HepG2 (cell line): ENCODE measurements at regions of chr2 and their contacts with region 1.

Region 1: DNA sequence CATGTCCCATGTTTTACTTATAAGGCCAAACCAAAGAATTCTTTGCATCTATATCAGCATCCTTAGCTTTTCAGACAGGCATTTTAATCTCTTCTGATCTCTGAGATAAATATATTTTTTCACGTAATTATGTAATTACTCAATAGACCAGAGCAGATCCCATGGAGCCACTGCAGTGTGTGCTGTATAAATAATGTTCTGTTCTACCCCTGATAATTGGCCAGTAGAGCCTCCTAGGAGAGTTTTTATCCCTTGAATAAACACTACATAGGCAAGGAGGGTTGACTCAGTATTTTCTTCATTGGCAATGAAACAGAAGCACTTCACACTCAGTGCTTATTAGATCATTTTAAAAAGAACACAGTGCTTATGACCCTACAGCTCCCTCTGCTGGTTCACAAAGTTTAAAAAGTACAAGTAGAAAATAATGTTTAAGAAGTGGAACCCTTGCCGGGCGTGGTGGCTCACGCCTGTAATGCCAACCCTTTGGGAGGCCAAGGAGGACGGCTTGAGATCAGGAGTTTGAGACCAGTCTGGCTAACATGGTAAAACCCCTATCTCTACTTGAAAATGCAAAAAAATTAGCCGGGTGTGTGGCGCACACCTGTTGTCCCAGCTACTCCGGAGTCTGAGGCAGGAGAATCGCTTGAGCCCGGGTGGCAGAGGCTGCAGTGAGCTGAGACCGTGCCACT is 91.9 kb downstream of the PPP1R1C start:
- DNase-seq: peak; percentile 79
- ATAC-seq: peak; percentile 89
- H3K4me3 ChIP-seq: no peak overlapping the region
- H3K27ac ChIP-seq: no peak overlapping the region
- H3K4me1 ChIP-seq: 0 out of 2 replicates have a peak, but pooled peaks cover 12% of the 10 kb centered on the region
- H3K27me3 ChIP-seq: no peaks in the 10 kb centered on the region
- CTCF ChIP-seq: peak; percentile 84
- EP300 ChIP-seq: no peak
- POLR2A ChIP-seq: no peak
- RAD21 ChIP-seq: peak; percentile 71

Region 2: DNA sequence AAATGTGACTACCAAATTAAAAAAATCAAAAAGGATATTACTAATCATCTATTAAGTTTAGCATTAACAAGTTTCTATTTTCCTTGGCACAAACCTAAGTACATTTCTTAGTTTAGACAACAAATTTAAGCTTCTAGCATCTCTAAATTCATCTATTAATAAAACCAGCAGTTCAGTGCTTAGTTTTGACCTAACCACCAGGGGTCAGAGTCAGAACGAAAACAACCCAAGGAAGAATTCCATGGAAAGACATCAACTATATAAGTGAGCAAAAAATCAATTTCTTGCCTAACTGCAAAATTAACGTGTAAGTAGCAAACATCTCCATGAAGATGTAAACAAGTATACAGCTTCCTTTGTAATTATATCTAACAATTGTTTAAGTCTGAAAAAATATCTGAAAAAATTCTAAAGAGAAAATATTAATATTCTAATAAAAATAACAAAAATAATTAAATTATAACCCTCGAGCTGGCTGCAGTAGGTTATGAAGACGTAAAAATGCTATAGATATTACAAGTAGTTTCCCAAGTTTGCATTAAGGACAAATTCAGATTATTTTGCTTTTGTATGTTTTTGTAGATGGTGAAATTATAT is 504.4 kb before region 1 on chr2:
- CTCF ChIA-PET with region 1: interaction called, 6 read pairs
- POLR2A ChIA-PET with region 1: no interaction called
- in situ Hi-C with region 1: no loop called
- intact Hi-C with region 1: loop called (anchors 1 kb)
- DNase-seq: peak; percentile 45
- ATAC-seq: peak; percentile 66; the same call in 2 of the 3 replicates
- H3K4me3 ChIP-seq: no peak overlapping the region
- H3K27ac ChIP-seq: no peak overlapping the region
- H3K4me1 ChIP-seq: no peaks in the 10 kb centered on the region
- H3K27me3 ChIP-seq: no peaks in the 10 kb centered on the region
- CTCF ChIP-seq: peak; percentile 60
- EP300 ChIP-seq: no peak
- POLR2A ChIP-seq: no peak
- RAD21 ChIP-seq: peak; percentile 38; the same call in 1 of the 2 replicates

Region 3: GRCh38 chr2:181738074-181738473 is 339.5 kb before region 1 on chr2:
- CTCF ChIA-PET with region 1: interaction called, 50 read pairs
- POLR2A ChIA-PET with region 1: no interaction called
- in situ Hi-C with region 1: loop called (anchors 5 kb)
- intact Hi-C with region 1: loop called (anchors 1 kb)
- DNase-seq: no peak
- ATAC-seq: peak; percentile 83
- H3K4me3 ChIP-seq: no peak overlapping the region
- H3K27ac ChIP-seq: no peak overlapping the region
- H3K4me1 ChIP-seq: peaks cover 6% of the 10 kb centered on the region
- H3K27me3 ChIP-seq: no peaks in the 10 kb centered on the region
- CTCF ChIP-seq: peak; percentile 44
- EP300 ChIP-seq: no peak
- POLR2A ChIP-seq: no peak
- RAD21 ChIP-seq: no peak

Region 4: GRCh38 chr2:181904022-181904632 is 173.5 kb before region 1 on chr2:
- CTCF ChIA-PET with region 1: no interaction called
- POLR2A ChIA-PET with region 1: no interaction called
- in situ Hi-C with region 1: no loop called
- intact Hi-C with region 1: loop called (anchors 1 kb)
- DNase-seq: peak; percentile 66
- ATAC-seq: peak; percentile 72
- H3K4me3 ChIP-seq: no peak overlapping the region
- H3K27ac ChIP-seq: no peak overlapping the region
- H3K4me1 ChIP-seq: peaks cover 47% of the 10 kb centered on the region
- H3K27me3 ChIP-seq: no peaks in the 10 kb centered on the region
- CTCF ChIP-seq: peak; percentile 63
- EP300 ChIP-seq: no peak
- POLR2A ChIP-seq: no peak
- RAD21 ChIP-seq: peak; percentile 31; the same call in 1 of the 2 replicates

Region 5: DNA sequence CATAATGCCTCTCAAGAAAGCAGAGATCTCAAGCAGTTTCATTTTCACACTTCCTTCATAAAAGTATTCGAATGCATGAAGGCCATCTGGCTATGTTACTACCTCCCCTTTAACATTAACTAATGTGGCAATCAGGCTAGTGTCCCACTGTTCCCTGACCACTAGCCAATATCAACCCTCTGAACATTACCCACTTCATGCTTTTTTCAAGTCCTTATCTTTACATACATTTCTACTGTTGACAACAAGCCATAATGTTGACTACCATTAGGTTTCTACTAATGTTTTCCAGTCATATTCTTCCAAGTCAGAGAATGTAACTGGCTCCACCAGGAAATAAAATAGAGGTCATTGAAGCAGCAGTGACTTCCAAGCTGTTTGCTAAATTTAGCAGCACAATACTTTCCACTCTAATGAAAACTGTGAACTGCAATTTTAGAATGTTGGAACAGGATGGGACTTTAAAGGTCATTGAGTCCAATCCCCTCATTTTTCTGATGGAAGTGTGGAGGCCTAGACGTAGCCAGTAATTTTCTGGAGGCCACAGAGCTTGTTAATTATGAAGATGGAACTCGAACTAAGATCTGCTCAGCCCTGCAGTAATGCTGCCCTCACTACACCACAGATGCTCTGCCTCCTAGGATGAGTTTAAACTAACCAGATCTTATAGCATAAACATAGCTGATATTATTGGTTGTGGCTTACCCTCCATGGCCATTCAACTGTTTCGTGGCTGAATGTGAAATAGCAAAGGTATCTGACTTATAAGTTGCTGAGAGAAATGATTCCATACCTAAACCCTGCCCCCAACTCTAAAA is 92.6 kb before region 1 on chr2:
- CTCF ChIA-PET with region 1: no interaction called
- POLR2A ChIA-PET with region 1: no interaction called
- in situ Hi-C with region 1: no loop called
- intact Hi-C with region 1: no loop called
- DNase-seq: no peak
- ATAC-seq: no peak
- H3K4me3 ChIP-seq: no peak overlapping the region
- H3K27ac ChIP-seq: no peak overlapping the region
- H3K4me1 ChIP-seq: no peaks in the 10 kb centered on the region
- H3K27me3 ChIP-seq: no peaks in the 10 kb centered on the region
- CTCF ChIP-seq: no peak
- EP300 ChIP-seq: no peak
- POLR2A ChIP-seq: no peak
- RAD21 ChIP-seq: no peak

Region 6: DNA sequence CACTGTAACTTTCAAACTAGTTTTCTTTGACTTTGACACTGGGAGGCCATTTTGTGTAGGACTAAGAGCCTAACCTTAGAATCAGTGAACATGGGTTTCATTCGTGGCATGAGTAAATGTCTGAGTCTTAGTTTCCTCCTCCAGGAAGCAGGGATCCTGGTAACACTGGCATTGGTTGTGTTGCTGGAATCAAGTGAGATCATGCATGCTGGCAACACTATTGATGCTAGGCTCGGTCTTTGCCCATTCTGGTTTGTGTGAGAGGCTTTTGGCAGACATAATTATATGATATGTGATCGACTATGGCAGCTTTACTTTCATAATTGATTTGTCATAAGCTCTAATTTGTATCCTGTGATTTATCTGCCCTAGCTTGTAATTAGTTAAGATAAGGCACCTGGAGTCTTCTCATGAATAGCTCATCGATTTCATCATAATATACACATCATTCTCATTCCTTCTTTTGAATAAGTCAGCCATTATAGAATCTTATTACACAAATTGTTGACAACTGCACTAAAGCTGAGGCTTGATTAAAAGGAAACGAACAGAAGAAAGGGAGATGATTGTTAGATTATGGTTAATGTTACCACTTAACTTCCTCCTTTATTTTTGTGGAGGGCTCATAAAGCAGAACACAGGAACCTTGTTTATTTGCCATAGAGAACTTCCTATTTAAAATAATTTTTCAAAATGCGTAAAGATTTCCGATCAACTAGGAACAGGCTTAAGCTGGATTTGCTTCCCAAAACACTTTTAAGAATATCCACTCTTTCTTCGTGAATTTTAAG is 79.4 kb before region 1 on chr2:
- CTCF ChIA-PET with region 1: no interaction called
- POLR2A ChIA-PET with region 1: no interaction called
- in situ Hi-C with region 1: no loop called
- intact Hi-C with region 1: no loop called
- DNase-seq: no peak
- ATAC-seq: no peak
- H3K4me3 ChIP-seq: no peak overlapping the region
- H3K27ac ChIP-seq: no peak overlapping the region
- H3K4me1 ChIP-seq: peaks cover 10% of the 10 kb centered on the region
- H3K27me3 ChIP-seq: no peaks in the 10 kb centered on the region
- CTCF ChIP-seq: no peak
- EP300 ChIP-seq: no peak
- POLR2A ChIP-seq: no peak
- RAD21 ChIP-seq: no peak

Region 7: DNA sequence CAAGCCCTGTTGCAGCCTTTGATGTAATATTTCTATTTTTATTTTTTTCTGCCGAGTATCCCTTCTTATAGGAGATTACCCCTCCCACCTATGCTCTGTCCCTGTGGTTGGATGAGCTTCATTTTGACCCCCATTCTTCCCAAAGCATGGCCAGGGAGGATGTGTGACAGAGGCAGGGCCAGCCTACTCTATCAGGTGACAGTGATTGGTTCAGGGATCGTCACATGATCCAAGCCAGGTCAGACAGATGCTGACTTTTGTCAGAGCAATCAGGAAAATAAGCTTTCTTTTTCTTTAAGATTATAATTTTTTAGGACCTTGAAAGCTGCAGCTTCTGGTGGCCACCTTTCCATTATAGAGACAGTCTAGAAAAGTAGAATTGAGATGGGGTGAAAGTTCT is 1360.9 kb after region 1 on chr2:
- CTCF ChIA-PET with region 1: no interaction called
- POLR2A ChIA-PET with region 1: no interaction called
- in situ Hi-C with region 1: no loop called
- intact Hi-C with region 1: no loop called
- DNase-seq: no peak
- ATAC-seq: no peak
- H3K4me3 ChIP-seq: no peak overlapping the region
- H3K27ac ChIP-seq: no peak overlapping the region
- H3K4me1 ChIP-seq: no peaks in the 10 kb centered on the region
- H3K27me3 ChIP-seq: no peaks in the 10 kb centered on the region
- CTCF ChIP-seq: no peak
- EP300 ChIP-seq: no peak
- POLR2A ChIP-seq: no peak
- RAD21 ChIP-seq: no peak